ENCODE measurements at regions of chr16 and their contacts with region 1.

Region 1: DNA sequence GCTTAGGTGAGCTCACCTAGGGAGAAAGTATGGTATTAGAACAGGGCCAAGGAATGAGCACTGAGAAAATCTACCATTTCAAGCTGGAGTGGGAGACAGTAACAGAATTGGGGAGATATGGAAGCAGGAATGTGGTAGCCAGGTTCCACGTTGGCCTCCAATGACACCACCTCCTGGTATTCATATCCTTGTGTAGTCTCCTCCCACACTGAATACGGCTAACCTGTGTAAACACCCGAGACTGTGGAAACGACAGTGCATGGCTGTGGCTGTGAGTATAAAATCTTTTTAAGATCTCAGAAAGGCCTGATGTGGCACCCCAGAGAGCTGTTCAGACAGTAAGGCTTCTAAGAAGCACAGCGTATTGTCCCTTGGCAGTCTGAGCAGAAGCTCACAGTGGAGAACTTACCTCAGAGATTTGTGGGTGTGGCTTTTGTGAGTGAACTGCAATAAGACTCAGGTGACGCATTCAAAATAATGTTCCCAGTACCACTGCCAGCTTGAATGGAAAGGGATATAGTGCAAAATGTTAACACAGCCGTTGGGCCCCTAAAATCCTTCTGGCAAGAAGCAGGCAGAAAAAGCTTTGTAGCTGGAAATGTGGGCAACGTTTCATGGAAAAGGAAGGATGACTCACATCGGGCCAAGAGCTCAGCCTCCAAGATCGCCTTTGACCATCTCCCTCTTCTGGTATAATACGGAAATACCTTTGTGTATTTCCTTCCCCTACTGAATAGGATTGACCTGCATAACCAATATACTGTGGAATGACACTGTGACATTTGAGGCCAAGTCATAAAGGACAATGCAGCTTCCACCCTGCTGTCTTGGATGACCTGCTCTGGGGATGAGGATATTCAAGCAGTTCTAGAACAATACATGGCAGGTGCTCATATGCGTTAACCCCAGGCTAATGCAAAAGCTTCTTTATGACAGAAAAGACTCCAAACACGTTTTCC is 14.3 kb downstream of the SDR42E1 start:
- DNase-seq: peak; percentile 39 to 47 (median 43)
- ATAC-seq: peak; percentile 80
- H3K4me3 ChIP-seq: no peak overlapping the region
- H3K27ac ChIP-seq: no peak overlapping the region
- H3K4me1 ChIP-seq: no peaks in the 10 kb centered on the region; a peak in 1 of 5 replicates
- H3K27me3 ChIP-seq: peaks cover 0 to 17% of the 10 kb centered on the region in 2 experiments; a peak in 3 of 5 replicates
- CTCF ChIP-seq: peak; percentile 28 to 56 (median 37); a peak in 4 of 6 replicates
- EP300 ChIP-seq: no peak
- POLR2A ChIP-seq: no peak
- RAD21 ChIP-seq: peak; percentile 44 to 56; a peak in 3 of 4 replicates

Region 2: DNA sequence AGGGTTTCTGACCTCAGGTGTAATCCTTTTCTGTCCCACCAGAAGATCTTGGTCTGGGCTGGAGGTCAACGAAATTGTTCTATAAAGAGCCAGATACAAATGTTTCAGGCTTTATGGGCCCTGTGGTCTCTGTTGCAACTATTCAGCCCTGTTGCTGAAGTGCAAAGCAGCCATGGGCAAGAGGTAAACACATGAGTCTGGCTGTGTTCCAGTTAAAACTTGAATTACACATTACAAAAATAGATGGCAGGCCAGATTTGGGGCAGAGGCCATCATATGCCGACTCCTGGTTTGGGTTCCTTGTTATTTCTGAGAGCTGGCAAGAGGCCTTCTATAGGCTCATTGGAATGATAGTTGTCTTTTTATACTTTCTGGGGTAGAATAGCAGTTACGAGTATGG is 100.0 kb before region 1 on chr16:
- CTCF ChIA-PET with region 1: interaction called, 3 read pairs
- POLR2A ChIA-PET with region 1: interaction called, 3 read pairs
- in situ Hi-C with region 1: no loop called
- intact Hi-C with region 1: loop called (anchors 5 kb)
- DNase-seq: no peak
- ATAC-seq: no peak
- H3K4me3 ChIP-seq: no peak overlapping the region
- H3K27ac ChIP-seq: no peak overlapping the region
- H3K4me1 ChIP-seq: peaks cover 0 to 6% of the 10 kb centered on the region in 2 experiments; a peak in 1 of 5 replicates
- H3K27me3 ChIP-seq: peaks cover 8 to 40% of the 10 kb centered on the region in 2 experiments; a peak in 4 of 5 replicates
- CTCF ChIP-seq: no peak
- EP300 ChIP-seq: no peak
- POLR2A ChIP-seq: no peak
- RAD21 ChIP-seq: no peak

Region 3: DNA sequence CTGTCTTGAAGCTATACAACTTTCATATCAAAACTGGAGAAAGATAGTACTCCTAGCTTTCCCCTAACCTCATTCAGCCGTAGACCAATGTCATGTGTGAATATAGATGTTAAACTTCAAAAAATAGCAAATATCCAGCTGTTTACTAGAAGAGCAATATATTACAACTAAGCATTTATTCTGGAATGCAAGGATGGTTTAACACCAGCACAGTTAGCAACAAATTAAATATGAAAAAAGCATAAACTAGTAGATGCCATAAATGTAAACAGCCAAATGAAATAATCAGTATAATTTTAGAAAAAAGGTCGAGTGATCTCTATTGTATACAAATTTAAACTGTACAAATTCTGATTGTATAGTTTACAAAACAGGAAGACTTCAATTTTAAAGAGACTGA is 45.4 kb before region 1 on chr16:
- CTCF ChIA-PET with region 1: no interaction called
- POLR2A ChIA-PET with region 1: no interaction called
- in situ Hi-C with region 1: no loop called
- intact Hi-C with region 1: no loop called
- DNase-seq: no peak
- ATAC-seq: no peak
- H3K4me3 ChIP-seq: no peak overlapping the region
- H3K27ac ChIP-seq: no peak overlapping the region
- H3K4me1 ChIP-seq: no peaks in the 10 kb centered on the region
- H3K27me3 ChIP-seq: peaks cover 3 to 8% of the 10 kb centered on the region in 2 experiments; a peak in 2 of 5 replicates
- CTCF ChIP-seq: no peak
- EP300 ChIP-seq: no peak
- POLR2A ChIP-seq: no peak
- RAD21 ChIP-seq: no peak

Measured in K562 (cell line).